PC-9 (cell line): ENCODE measurements at regions of chr7 and their contacts with region 1.

Region 1: GRCh38 chr7:119175911-119176627 is 951.6 kb downstream of the ANKRD7 start:
- DNase-seq: peak in 1 of 2 experiments; percentile 38
- H3K4me3 ChIP-seq: no peak overlapping the region
- H3K27ac ChIP-seq: no peak overlapping the region
- H3K4me1 ChIP-seq: no peaks in the 10 kb centered on the region
- H3K27me3 ChIP-seq: no peaks in the 10 kb centered on the region
- CTCF ChIP-seq: peak; percentile 80

Region 2: GRCh38 chr7:118259115-118259514 is 917.0 kb before region 1 on chr7:
- CTCF ChIA-PET with region 1: no interaction called
- POLR2A ChIA-PET with region 1: no interaction called
- intact Hi-C with region 1: loop called (anchors 5 kb)
- DNase-seq: no peak
- H3K4me3 ChIP-seq: no peak overlapping the region
- H3K27ac ChIP-seq: no peak overlapping the region
- H3K4me1 ChIP-seq: no peaks in the 10 kb centered on the region
- H3K27me3 ChIP-seq: no peaks in the 10 kb centered on the region
- CTCF ChIP-seq: peak; percentile 25; the same call in 1 of the 2 replicates

Region 3: GRCh38 chr7:118352854-118353453 is 823.1 kb before region 1 on chr7:
- CTCF ChIA-PET with region 1: no interaction called
- POLR2A ChIA-PET with region 1: no interaction called
- intact Hi-C with region 1: loop called (anchors 2 kb)
- DNase-seq: no peak
- H3K4me3 ChIP-seq: no peak overlapping the region
- H3K27ac ChIP-seq: no peak overlapping the region
- H3K4me1 ChIP-seq: no peaks in the 10 kb centered on the region
- H3K27me3 ChIP-seq: no peaks in the 10 kb centered on the region
- CTCF ChIP-seq: peak; percentile 58

Region 4: GRCh38 chr7:118918556-118918955 is 257.5 kb before region 1 on chr7:
- CTCF ChIA-PET with region 1: no interaction called
- POLR2A ChIA-PET with region 1: no interaction called
- intact Hi-C with region 1: loop called (anchors 1 kb)
- DNase-seq: peak in 1 of 2 experiments; percentile 42
- H3K4me3 ChIP-seq: no peak overlapping the region
- H3K27ac ChIP-seq: no peak overlapping the region
- H3K4me1 ChIP-seq: no peaks in the 10 kb centered on the region
- H3K27me3 ChIP-seq: no peaks in the 10 kb centered on the region
- CTCF ChIP-seq: peak; percentile 72